ENCODE measurements at regions of chr6 and their contacts with region 1.

Region 1: GRCh38 chr6:36874443-36875249 is at the start of gene PPIL1:
- DNase-seq: no peak
- H3K4me3 ChIP-seq: peak within 1 kb of the TSS; percentile 55
- H3K27me3 ChIP-seq: no peaks in the 10 kb centered on the region
- CTCF ChIP-seq: no peak
- polyA plus RNA-seq, gene PPIL1: 23.4 and 34.8 TPM in 2 replicates

Region 2: DNA sequence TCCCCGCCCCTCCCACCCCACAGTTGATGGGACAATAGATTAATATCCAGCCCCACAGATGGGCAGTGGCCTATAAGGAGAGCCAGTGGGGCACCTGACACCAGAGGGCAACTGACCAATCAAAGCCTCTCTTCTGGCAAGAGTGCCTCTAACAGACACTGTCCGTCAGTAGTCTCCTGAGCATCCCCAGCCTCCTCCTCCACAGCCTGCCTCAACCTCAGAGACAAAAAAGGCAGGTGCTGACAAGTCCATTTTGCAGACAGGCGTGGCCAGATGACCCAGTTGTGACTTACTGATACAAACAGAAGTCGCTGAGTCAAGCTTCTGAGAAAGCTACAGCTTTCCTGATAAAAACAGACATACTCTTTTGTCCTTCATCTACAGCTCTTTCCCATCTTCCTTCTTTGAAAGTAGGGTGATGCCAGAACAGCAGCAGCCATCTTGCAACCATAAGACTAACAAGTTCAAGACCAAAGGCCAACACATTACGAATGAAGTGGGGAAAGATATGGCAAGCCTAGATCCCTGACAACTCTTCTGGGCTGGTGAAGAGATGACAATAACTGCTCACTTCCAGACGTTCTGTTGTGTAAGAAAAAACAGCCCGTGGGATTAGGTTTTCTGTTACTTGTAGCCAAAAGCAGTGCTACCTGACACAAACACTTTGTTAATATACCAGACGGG is 12.3 kb before region 1 on chr6:
- CTCF ChIA-PET with region 1: interaction called, 20 read pairs
- POLR2A ChIA-PET with region 1: interaction called, 3 read pairs
- DNase-seq: no peak
- H3K4me3 ChIP-seq: no peak overlapping the region
- H3K27me3 ChIP-seq: no peaks in the 10 kb centered on the region
- CTCF ChIP-seq: no peak

Measured in BJ (cell line).